ENCODE measurements at regions of chr10 and their contacts with region 1.

Region 1: GRCh38 chr10:87054373-87055295 is 34.5 kb downstream of the FAM25A start:
- DNase-seq: no peak
- H3K4me3 ChIP-seq: no peak overlapping the region
- H3K27ac ChIP-seq: peak overlapping the region; percentile 18 to 25
- H3K4me1 ChIP-seq: no peaks in the 10 kb centered on the region
- H3K27me3 ChIP-seq: no peaks in the 10 kb centered on the region
- CTCF ChIP-seq: no peak

Region 2: DNA sequence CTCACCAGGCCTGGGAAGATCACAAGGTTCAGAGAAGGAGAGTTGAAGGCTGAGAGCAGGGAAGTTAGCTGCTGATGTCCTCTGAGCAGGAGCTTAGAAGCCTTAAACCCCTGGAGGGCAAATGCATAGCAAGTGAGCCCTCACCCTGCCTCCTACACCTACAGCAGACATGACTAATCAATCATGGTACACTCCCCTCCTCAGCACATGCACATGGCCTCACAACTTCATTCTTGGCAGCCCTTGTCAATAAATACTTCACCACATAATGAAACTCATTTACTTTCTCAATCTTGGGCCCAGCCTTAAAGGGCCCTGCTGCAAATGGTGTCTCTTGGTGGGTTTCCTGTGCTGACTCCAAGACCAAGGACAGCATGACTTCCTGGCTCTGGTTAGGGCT is 110.2 kb before region 1 on chr10:
- intact Hi-C with region 1: loop called (anchors 5 kb)
- DNase-seq: peak in 1 of 2 donors; percentile 34
- H3K4me3 ChIP-seq: no peak overlapping the region
- H3K27ac ChIP-seq: peak overlapping the region in 1 of 2 donors; percentile 49
- H3K4me1 ChIP-seq: peaks cover 7 to 23% of the 10 kb centered on the region in 2 donors
- H3K27me3 ChIP-seq: no peaks in the 10 kb centered on the region
- CTCF ChIP-seq: no peak

Region 3: DNA sequence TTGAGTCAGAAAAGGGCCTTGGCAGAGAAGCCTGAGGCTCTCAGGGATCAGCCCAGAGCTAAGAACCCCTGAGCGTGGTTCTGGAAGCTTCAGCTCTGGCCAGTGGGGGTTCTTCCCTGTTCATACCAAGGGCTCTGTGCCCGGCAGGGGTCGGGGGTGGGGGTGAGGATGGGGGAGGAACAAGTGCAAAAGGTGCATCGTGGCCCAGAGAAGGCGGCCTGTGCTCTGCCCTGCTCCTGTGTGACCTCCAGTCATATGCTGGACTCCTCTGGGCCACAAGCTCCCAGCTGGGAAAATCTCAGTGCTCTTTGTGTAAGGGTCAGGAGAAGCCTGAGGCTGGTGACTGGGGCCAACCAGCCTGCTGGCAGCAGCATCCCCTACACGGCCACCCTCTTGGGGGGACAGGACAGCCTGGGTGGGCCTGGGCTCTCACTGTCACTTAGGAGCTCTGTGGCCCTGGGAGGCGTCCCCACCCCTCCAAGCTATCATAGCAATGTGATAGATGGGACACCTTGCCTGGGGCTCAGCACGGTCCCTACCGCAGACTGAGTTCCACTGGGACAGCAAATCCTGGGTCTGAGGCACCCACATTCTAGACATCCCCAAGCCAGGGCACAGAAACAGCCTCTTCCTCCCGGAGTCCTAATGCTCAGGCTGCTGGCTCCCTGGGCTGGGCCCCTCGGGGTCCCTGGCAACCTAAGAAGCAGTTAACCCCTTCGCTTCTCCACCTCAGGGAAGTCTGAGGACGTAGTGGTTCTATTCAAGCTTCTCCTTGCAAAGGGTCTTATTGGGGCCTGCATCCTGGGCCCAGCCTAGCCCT is 99.7 kb before region 1 on chr10:
- intact Hi-C with region 1: no loop called
- DNase-seq: no peak
- H3K4me3 ChIP-seq: peak overlapping the region in 1 of 2 donors; percentile 1
- H3K27ac ChIP-seq: peak overlapping the region; percentile 95 to 98
- H3K4me1 ChIP-seq: peaks cover 55 to 74% of the 10 kb centered on the region in 2 donors
- H3K27me3 ChIP-seq: no peaks in the 10 kb centered on the region
- CTCF ChIP-seq: no peak

Region 4: GRCh38 chr10:87670586-87670985 is 616.0 kb after region 1 on chr10:
- intact Hi-C with region 1: no loop called
- DNase-seq: no peak
- H3K4me3 ChIP-seq: no peak overlapping the region
- H3K27ac ChIP-seq: no peak overlapping the region
- H3K4me1 ChIP-seq: no peaks in the 10 kb centered on the region
- H3K27me3 ChIP-seq: no peaks in the 10 kb centered on the region
- CTCF ChIP-seq: no peak

Measured in ascending aorta (tissue), 2 donors.